ENCODE measurements at regions of chr2 and their contacts with region 1.

Region 1: DNA sequence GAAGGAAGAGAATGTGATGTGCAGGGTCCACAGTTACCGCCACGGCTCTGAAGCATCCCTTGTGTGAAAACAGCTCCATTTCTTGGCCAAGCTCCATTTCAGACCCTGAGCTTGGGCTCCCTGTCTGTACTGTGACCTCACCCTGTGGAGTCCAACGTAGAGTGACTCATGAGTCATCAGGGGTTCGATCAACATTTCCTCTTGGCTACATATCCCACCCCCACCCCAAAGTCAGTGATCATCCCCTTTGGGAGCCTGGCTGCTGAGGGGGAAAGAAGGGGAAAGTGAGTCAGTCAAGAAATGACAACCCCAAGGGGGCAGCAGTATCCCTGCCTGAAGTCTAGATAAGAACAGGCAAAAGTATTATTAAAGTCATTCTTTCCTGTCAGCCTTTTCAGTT is 62.2 kb downstream of the PAPOLG start:
- DNase-seq: peak in 1 of 5 donors; percentile 73
- H3K4me3 ChIP-seq: no peak overlapping the region
- H3K4me3 Mint-ChIP-seq: peak overlapping the region in 5 of 8 donors; percentile 11 to 78 (median 53)
- H3K27ac ChIP-seq: no peak overlapping the region
- H3K27ac Mint-ChIP-seq: peak overlapping the region; percentile 90 to 98 (median 97)
- H3K4me1 ChIP-seq: peaks cover 35% of the 10 kb centered on the region
- H3K4me1 Mint-ChIP-seq: peaks cover 25 to 56% (median 40%) of the 10 kb centered on the region in 4 donors
- H3K27me3 ChIP-seq: no peaks in the 10 kb centered on the region
- H3K27me3 Mint-ChIP-seq: peaks cover 0 to 5% of the 10 kb centered on the region in 2 donors

Region 2: GRCh38 chr2:60535685-60536312 is 282.5 kb before region 1 on chr2:
- CTCF ChIA-PET with region 1: no interaction called
- POLR2A ChIA-PET with region 1: no interaction called
- intact Hi-C with region 1: no loop called
- DNase-seq: no peak
- H3K4me3 ChIP-seq: no peak overlapping the region
- H3K4me3 Mint-ChIP-seq: no peak overlapping the region
- H3K27ac ChIP-seq: no peak overlapping the region
- H3K27ac Mint-ChIP-seq: no peak overlapping the region
- H3K4me1 ChIP-seq: no peaks in the 10 kb centered on the region
- H3K4me1 Mint-ChIP-seq: no peaks in the 10 kb centered on the region
- H3K27me3 ChIP-seq: no peaks in the 10 kb centered on the region
- H3K27me3 Mint-ChIP-seq: peaks cover 39 to 40% of the 10 kb centered on the region in 2 donors

Region 3: DNA sequence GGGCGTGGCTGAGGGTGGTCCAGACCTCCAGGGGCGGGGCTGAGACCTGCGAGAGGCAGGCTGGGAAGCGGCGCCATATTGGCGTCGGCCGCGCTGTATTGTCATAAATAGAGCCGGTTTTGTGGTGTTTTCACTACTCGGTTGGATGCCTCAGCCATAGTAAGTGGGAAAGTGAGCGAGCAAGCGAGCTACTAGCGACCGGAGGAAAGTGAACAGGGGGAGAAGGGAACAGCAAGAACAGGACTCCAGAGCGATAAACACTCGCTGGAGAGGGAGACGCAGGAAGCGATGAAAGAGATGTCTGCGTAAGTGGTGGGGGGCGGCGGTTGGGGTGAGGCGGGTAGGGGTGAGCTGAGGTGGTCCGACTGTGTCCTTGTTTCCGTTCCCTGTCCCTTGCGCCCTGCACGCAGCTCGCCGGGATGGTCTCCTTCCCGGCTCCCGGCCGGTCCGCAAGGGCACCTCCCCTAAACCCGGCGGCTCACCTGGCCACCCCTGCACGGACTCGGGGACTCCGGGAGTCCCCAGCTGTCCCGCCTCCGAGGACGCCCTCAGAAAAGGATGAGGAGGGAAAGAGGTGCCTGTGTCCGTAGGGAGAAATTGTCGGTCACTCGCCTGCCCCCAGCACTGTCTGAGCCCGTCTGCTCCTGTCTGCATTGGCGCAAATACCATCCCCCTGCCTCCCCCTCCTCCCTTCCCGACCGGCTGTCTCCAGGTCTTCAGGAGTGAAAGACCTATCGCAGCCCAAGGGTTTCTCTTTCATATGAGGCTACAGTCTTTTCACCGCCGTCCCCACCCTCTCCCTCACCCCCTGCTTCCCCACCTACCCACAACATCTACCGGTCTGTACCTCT is 61.9 kb before region 1 on chr2 and contains the start of gene PAPOLG:
- CTCF ChIA-PET with region 1: no interaction called
- POLR2A ChIA-PET with region 1: interaction called, 11 read pairs
- intact Hi-C with region 1: no loop called
- DNase-seq: peak; percentile 92 to 96 (median 93)
- H3K4me3 ChIP-seq: peak within 1 kb of the TSS; percentile 76 to 92
- H3K4me3 Mint-ChIP-seq: peak within 1 kb of the TSS; percentile 98 to 100 (median 100)
- H3K27ac ChIP-seq: peak within 1 kb of the TSS; percentile 89
- H3K27ac Mint-ChIP-seq: peak within 1 kb of the TSS; percentile 84 to 100 (median 99)
- H3K4me1 ChIP-seq: peaks cover 36% of the 10 kb centered on the region
- H3K4me1 Mint-ChIP-seq: peaks cover 28 to 51% (median 40%) of the 10 kb centered on the region in 4 donors
- H3K27me3 ChIP-seq: no peaks in the 10 kb centered on the region
- H3K27me3 Mint-ChIP-seq: no peaks in the 10 kb centered on the region
- total RNA-seq, gene PAPOLG: 40.1 to 40.3 TPM

Region 4: DNA sequence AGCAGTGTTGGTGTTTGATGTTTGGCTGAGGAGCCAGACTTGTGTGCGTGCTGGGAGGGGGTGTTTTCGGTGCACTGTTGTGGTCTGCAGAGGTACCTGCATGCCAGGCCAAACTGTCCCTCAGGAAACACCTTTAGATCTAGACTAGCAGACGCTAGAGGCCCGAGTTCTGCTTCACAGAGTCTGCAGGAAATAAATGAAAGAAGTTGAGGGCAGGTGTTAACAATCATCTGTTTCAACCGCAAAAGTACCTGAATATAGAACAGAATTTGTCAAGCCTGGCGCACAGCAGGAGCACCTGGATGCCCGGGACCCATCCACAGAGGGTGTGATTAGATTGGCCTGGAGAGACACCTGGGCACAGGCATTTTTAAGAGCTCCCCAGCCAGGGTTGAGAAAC is 22.6 kb after region 1 on chr2:
- CTCF ChIA-PET with region 1: interaction called, 3 read pairs
- POLR2A ChIA-PET with region 1: interaction called, 3 read pairs
- intact Hi-C with region 1: loop called (anchors 2 kb)
- DNase-seq: peak in 3 of 5 donors; percentile 6 to 13 (median 9)
- H3K4me3 ChIP-seq: no peak overlapping the region
- H3K4me3 Mint-ChIP-seq: peak overlapping the region in 6 of 8 donors; percentile 0 to 64 (median 36)
- H3K27ac ChIP-seq: no peak overlapping the region
- H3K27ac Mint-ChIP-seq: peak overlapping the region in 6 of 7 donors; percentile 14 to 88 (median 64)
- H3K4me1 ChIP-seq: peaks cover 14% of the 10 kb centered on the region
- H3K4me1 Mint-ChIP-seq: peaks cover 9 to 14% (median 13%) of the 10 kb centered on the region in 4 donors
- H3K27me3 ChIP-seq: no peaks in the 10 kb centered on the region
- H3K27me3 Mint-ChIP-seq: no peaks in the 10 kb centered on the region

Region 5: GRCh38 chr2:60852282-60852860 is 34.1 kb after region 1 on chr2:
- CTCF ChIA-PET with region 1: no interaction called
- POLR2A ChIA-PET with region 1: no interaction called
- intact Hi-C with region 1: no loop called
- DNase-seq: no peak
- H3K4me3 ChIP-seq: no peak overlapping the region
- H3K4me3 Mint-ChIP-seq: no peak overlapping the region
- H3K27ac ChIP-seq: no peak overlapping the region
- H3K27ac Mint-ChIP-seq: no peak overlapping the region
- H3K4me1 ChIP-seq: no peaks in the 10 kb centered on the region
- H3K4me1 Mint-ChIP-seq: peaks cover 0 to 2% (median 0%) of the 10 kb centered on the region in 4 donors
- H3K27me3 ChIP-seq: no peaks in the 10 kb centered on the region
- H3K27me3 Mint-ChIP-seq: no peaks in the 10 kb centered on the region

Region 6: DNA sequence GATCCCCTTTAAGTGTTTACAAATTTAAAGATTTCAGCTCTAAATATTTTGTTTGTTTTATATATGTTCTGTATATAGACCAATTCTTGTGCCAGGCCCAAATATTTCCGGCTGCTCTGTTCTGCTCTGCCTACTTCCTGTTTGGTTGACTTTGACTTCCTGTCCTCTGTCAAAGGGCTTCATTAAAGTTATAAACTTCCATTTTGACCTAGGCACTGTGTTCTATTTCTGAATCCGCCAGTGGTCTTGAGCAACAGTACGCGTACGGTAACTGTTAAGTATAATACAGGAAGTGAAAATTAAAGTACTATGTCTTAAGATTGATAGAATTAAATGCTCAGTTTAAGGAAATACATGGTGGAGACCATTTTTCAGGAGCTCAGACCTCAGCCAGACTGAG is 49.6 kb after region 1 on chr2:
- CTCF ChIA-PET with region 1: interaction called, 12 read pairs
- POLR2A ChIA-PET with region 1: interaction called, 11 read pairs
- intact Hi-C with region 1: no loop called
- DNase-seq: peak in 4 of 5 donors; percentile 54 to 65 (median 60)
- H3K4me3 ChIP-seq: no peak overlapping the region
- H3K4me3 Mint-ChIP-seq: peak overlapping the region in 7 of 8 donors; percentile 53 to 87 (median 69)
- H3K27ac ChIP-seq: peak overlapping the region; percentile 35
- H3K27ac Mint-ChIP-seq: peak overlapping the region; percentile 72 to 96 (median 93)
- H3K4me1 ChIP-seq: peaks cover 19% of the 10 kb centered on the region
- H3K4me1 Mint-ChIP-seq: peaks cover 14 to 23% (median 21%) of the 10 kb centered on the region in 4 donors
- H3K27me3 ChIP-seq: no peaks in the 10 kb centered on the region
- H3K27me3 Mint-ChIP-seq: peaks cover under 1% of the 10 kb centered on the region in 2 donors

Measured in CD4-positive, alpha-beta memory T cell (primary cell).